ENCODE measurements at regions of chr17 and their contacts with region 1.

Region 1: GRCh38 chr17:6435968-6436367 is 1.0 kb upstream of the AIPL1 start:
- H3K4me3 ChIP-seq: no peak overlapping the region
- H3K27ac ChIP-seq: no peak overlapping the region
- H3K4me1 ChIP-seq: no peaks in the 10 kb centered on the region
- CTCF ChIP-seq: peak; percentile 59

Region 2: GRCh38 chr17:6421700-6422604 is 14.0 kb before region 1 on chr17:
- CTCF ChIA-PET with region 1: interaction called, 15 read pairs
- POLR2A ChIA-PET with region 1: no interaction called
- H3K4me3 ChIP-seq: no peak overlapping the region
- H3K27ac ChIP-seq: no peak overlapping the region
- H3K4me1 ChIP-seq: no peaks in the 10 kb centered on the region
- CTCF ChIP-seq: peak; percentile 82

Region 3: GRCh38 chr17:6526362-6527152 is 90.6 kb after region 1 on chr17:
- CTCF ChIA-PET with region 1: no interaction called
- POLR2A ChIA-PET with region 1: no interaction called
- H3K4me3 ChIP-seq: no peak overlapping the region
- H3K27ac ChIP-seq: no peak overlapping the region
- H3K4me1 ChIP-seq: no peaks in the 10 kb centered on the region
- CTCF ChIP-seq: no peak